Heart left ventricle (tissue), 16 donors: ENCODE measurements at regions of chr13 and their contacts with region 1.

Region 1: DNA sequence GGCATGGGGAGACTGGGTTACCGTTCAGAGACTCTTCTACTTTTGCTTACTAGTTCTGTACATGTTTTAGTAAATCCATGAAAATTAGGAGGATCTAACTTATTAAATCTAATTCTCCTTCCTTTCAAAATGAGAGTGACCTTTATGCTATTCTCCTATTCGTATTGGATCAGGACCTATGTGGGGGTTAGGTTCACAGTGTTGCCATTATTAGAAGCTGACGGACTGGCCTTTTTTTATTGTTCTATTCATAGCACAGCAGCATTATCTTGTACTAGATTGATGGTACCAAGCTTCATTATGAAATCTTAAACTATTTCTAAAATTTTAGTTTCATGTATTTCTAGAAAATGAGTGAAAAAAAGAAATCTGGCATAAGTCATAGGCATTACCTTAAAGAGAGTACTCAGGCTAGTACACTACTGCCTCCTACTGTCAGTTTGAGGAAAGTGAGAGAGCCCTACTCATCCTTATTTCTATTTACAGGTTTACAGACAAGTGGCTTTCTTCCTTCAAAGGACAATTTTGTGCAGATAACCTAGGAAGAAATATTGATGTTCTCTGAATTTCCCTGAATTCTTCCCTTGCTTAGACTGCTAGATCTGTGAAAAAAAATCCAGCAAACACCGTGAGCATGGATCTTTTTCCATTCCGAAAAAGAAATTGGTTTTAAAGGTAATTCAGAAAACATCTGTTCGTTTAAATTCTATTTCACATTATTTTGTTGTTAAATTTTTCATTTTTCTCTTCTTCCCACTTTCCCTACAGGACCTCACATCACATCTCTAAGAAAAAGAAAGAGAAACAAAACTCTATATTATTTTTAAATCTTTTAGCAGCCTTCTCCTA is 485.5 kb downstream of the DIAPH3 start:
- DNase-seq: peak in 1 of 5 donors; percentile 16
- ATAC-seq: peak; percentile 87 to 95 (median 90)
- H3K4me3 ChIP-seq: no peak overlapping the region
- H3K27ac ChIP-seq: peak overlapping the region in 9 of 12 donors; percentile 0 to 64 (median 46)
- H3K4me1 ChIP-seq: peaks cover 0 to 21% (median 12%) of the 10 kb centered on the region in 12 donors
- H3K27me3 ChIP-seq: no peaks in the 10 kb centered on the region
- CTCF ChIP-seq: peak; percentile 71 to 91 (median 84)
- POLR2A ChIP-seq: no peak

Region 2: GRCh38 chr13:59182241-59182640 is 495.9 kb before region 1 on chr13:
- intact Hi-C with region 1: no loop called
- DNase-seq: no peak
- ATAC-seq: no peak
- H3K4me3 ChIP-seq: no peak overlapping the region
- H3K27ac ChIP-seq: no peak overlapping the region
- H3K4me1 ChIP-seq: no peaks in the 10 kb centered on the region
- H3K27me3 ChIP-seq: no peaks in the 10 kb centered on the region
- CTCF ChIP-seq: no peak
- POLR2A ChIP-seq: no peak

Region 3: GRCh38 chr13:59391696-59392095 is 286.5 kb before region 1 on chr13:
- intact Hi-C with region 1: loop called in 9 of 10 experiments (anchors 1 to 10 kb)
- DNase-seq: peak in 4 of 5 donors; percentile 37 to 78 (median 56)
- ATAC-seq: peak; percentile 55 to 85 (median 82)
- H3K4me3 ChIP-seq: no peak overlapping the region
- H3K27ac ChIP-seq: peak overlapping the region in 6 of 12 donors; percentile 3 to 71 (median 20)
- H3K4me1 ChIP-seq: peaks cover 0 to 12% (median 2%) of the 10 kb centered on the region in 12 donors
- H3K27me3 ChIP-seq: no peaks in the 10 kb centered on the region
- CTCF ChIP-seq: peak; percentile 83 to 95 (median 87)
- POLR2A ChIP-seq: no peak

Region 4: DNA sequence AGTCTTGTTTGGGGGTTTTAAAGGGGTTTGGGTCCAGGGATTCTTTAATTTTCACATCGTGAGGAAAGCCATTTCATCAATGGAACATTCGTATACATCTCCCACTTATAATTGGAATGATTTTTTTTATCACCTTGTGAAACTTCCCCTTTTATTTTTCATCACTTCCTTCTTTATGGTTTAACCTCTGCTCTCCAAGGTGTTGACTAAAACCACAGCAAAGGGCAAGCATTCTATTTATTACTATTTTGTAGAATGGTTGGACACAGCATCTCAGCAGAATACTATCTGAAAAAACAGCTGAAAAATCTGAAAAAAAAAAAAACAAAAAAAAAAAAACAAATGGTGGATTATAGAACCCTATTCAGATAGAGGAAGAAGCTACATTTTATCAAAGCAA is 240.3 kb before region 1 on chr13:
- intact Hi-C with region 1: no loop called
- DNase-seq: no peak
- ATAC-seq: no peak
- H3K4me3 ChIP-seq: no peak overlapping the region
- H3K27ac ChIP-seq: no peak overlapping the region
- H3K4me1 ChIP-seq: no peaks in the 10 kb centered on the region
- H3K27me3 ChIP-seq: no peaks in the 10 kb centered on the region
- CTCF ChIP-seq: no peak
- POLR2A ChIP-seq: no peak

Region 5: DNA sequence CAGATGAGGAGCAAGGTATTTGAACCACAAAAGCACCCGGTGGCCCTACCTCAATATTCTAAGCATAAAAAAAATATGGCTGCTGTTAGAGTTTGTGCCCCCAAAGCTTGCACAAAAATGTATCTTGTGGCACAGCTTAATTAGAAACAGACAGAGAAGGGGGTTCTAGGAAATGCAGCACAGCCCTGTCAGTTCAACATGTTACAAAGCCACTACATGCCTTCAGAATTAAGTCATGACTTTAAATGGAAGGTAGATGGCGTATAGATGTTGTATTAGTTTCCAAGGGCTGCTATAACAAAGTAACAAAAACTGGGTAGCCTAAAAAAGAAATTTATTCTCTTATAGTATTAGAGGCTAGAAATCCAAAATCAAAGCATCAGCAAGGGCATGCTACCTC is 218.2 kb before region 1 on chr13:
- intact Hi-C with region 1: loop called in 1 of 10 experiments (anchors 10 kb)
- DNase-seq: no peak
- ATAC-seq: no peak
- H3K4me3 ChIP-seq: no peak overlapping the region
- H3K27ac ChIP-seq: peak overlapping the region in 11 of 12 donors; percentile 28 to 86 (median 72)
- H3K4me1 ChIP-seq: peaks cover 0 to 14% (median 2%) of the 10 kb centered on the region in 12 donors
- H3K27me3 ChIP-seq: no peaks in the 10 kb centered on the region
- CTCF ChIP-seq: no peak
- POLR2A ChIP-seq: no peak

Region 6: DNA sequence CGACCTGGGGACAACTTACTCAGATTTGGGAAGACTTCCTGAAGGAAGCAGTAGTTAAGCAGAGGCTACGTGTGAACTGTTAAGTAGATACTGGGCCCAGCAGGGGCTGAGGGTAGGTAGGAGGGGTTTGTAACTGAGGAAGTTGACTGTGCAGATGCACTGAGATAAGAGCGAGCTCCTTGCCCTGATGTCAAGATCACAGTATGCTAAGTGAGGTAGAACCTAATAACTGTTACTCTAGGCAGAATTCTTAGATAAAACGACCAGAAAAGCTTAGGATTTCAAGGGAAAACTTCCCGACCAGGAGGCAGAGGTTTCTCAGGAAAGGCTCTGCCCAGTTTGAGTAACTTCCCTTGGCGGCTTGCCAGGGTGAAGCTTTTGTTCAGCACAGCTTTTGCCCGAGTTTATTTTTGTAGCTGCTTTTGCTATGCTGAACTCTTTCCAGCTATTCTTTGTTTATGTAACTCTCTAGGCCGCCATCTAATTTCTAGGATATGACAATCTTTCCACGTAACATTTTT is 146.6 kb before region 1 on chr13:
- intact Hi-C with region 1: loop called in 1 of 10 experiments (anchors 5 kb)
- DNase-seq: peak; percentile 87 to 93 (median 90)
- ATAC-seq: peak; percentile 78 to 94 (median 90)
- H3K4me3 ChIP-seq: no peak overlapping the region
- H3K27ac ChIP-seq: peak overlapping the region in 11 of 12 donors; percentile 19 to 72 (median 48)
- H3K4me1 ChIP-seq: peaks cover 3 to 41% (median 23%) of the 10 kb centered on the region in 12 donors
- H3K27me3 ChIP-seq: no peaks in the 10 kb centered on the region
- CTCF ChIP-seq: no peak
- POLR2A ChIP-seq: no peak

Region 7: DNA sequence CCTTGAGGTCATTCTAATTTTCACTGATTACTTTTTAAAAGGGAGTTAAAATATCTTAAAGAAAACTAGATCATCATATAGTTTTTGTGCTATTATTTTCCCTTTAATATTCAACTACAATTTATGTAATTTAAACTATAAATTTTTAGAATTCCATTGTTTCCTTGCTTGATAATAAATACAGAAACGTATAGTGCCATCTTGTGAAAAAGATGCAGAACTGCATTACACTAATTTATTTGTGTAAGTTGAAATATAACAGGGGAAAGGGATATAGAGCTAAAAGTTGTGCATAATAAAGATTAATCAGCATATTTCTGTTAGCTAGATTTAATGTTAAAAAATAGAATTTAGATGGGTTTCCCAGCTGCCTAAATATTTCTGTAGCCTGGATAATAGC is 657.3 kb after region 1 on chr13:
- intact Hi-C with region 1: loop called in 3 of 10 experiments (anchors 5 to 10 kb)
- DNase-seq: no peak
- ATAC-seq: no peak
- H3K4me3 ChIP-seq: no peak overlapping the region
- H3K27ac ChIP-seq: no peak overlapping the region
- H3K4me1 ChIP-seq: no peaks in the 10 kb centered on the region
- H3K27me3 ChIP-seq: peaks cover 0 to 8% (median 0%) of the 10 kb centered on the region in 9 donors
- CTCF ChIP-seq: peak; percentile 30 to 75 (median 55)
- POLR2A ChIP-seq: no peak

Region 8: DNA sequence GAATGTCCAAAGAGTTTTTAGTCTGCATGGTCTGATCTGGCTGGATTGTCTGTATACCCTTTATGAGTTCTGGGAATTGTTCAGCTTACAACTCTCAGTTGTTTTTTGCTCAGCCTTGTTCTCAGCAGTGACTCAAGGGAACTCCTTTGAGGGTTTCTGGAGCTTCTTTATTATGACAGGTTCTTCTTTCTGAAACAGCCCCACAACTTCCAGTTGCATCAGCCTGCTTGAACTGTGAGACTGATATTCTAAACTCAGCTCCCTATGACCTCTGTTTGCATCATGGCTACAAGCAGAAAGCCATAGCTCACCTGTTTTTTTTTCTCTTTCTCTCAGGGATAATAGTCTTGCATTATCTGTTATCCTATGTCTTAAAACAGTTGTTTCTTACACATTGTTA is 803.8 kb after region 1 on chr13:
- intact Hi-C with region 1: no loop called
- DNase-seq: no peak
- ATAC-seq: no peak
- H3K4me3 ChIP-seq: no peak overlapping the region
- H3K27ac ChIP-seq: no peak overlapping the region
- H3K4me1 ChIP-seq: no peaks in the 10 kb centered on the region
- H3K27me3 ChIP-seq: no peaks in the 10 kb centered on the region
- CTCF ChIP-seq: no peak
- POLR2A ChIP-seq: no peak